Caco-2 (cell line): ENCODE measurements at regions of chr3 and their contacts with region 1.

Region 1: DNA sequence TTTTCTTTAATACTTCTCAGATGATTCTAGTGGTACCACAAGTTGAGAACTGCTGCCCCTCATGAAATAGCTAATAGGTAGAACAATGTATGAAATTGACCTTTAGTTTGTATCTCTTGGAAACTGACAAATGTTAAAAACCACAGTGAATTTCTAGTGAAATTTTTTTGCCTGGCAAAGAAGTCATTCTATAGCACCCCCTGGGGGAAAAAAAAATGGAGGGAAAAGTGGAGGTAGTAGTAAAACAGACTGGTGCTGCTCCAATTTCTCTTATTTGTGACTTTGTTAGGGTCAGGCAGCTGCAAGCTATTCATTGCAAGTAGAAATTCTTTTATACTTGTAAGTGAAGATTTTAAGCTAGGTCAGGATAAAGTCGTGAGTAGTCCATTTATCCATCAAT is 605.0 kb downstream of the NLGN1 start:
- DNase-seq: peak in 1 of 2 experiments; percentile 35
- H3K4me3 ChIP-seq: no peak overlapping the region
- H3K4me3 Mint-ChIP-seq: no peak overlapping the region
- H3K27ac Mint-ChIP-seq: no peak overlapping the region
- H3K4me1 ChIP-seq: no peaks in the 10 kb centered on the region
- H3K4me1 Mint-ChIP-seq: no peaks in the 10 kb centered on the region
- H3K27me3 ChIP-seq: no peaks in the 10 kb centered on the region; the same call in 1 of the 2 replicates
- H3K27me3 Mint-ChIP-seq: peaks cover 12% of the 10 kb centered on the region
- CTCF ChIP-seq: peak; percentile 13 to 15

Region 2: GRCh38 chr3:173411375-173411973 is 591.1 kb before region 1 on chr3:
- CTCF ChIA-PET with region 1: no interaction called
- POLR2A ChIA-PET with region 1: no interaction called
- intact Hi-C with region 1: loop called (anchors 2 kb)
- DNase-seq: no peak
- H3K4me3 ChIP-seq: no peak overlapping the region
- H3K4me3 Mint-ChIP-seq: no peak overlapping the region
- H3K27ac Mint-ChIP-seq: no peak overlapping the region
- H3K4me1 ChIP-seq: no peaks in the 10 kb centered on the region
- H3K4me1 Mint-ChIP-seq: no peaks in the 10 kb centered on the region
- H3K27me3 ChIP-seq: no peaks in the 10 kb centered on the region
- H3K27me3 Mint-ChIP-seq: peaks cover 15% of the 10 kb centered on the region
- CTCF ChIP-seq: peak in 1 of 2 experiments; percentile 21

Region 3: GRCh38 chr3:173733029-173733652 is 269.4 kb before region 1 on chr3:
- CTCF ChIA-PET with region 1: no interaction called
- POLR2A ChIA-PET with region 1: no interaction called
- intact Hi-C with region 1: loop called (anchors 5 kb)
- DNase-seq: peak in 1 of 2 experiments; percentile 20
- H3K4me3 ChIP-seq: no peak overlapping the region
- H3K4me3 Mint-ChIP-seq: no peak overlapping the region
- H3K27ac Mint-ChIP-seq: no peak overlapping the region
- H3K4me1 ChIP-seq: no peaks in the 10 kb centered on the region
- H3K4me1 Mint-ChIP-seq: no peaks in the 10 kb centered on the region
- H3K27me3 ChIP-seq: no peaks in the 10 kb centered on the region
- H3K27me3 Mint-ChIP-seq: no peaks in the 10 kb centered on the region
- CTCF ChIP-seq: peak; percentile 38 to 48

Region 4: DNA sequence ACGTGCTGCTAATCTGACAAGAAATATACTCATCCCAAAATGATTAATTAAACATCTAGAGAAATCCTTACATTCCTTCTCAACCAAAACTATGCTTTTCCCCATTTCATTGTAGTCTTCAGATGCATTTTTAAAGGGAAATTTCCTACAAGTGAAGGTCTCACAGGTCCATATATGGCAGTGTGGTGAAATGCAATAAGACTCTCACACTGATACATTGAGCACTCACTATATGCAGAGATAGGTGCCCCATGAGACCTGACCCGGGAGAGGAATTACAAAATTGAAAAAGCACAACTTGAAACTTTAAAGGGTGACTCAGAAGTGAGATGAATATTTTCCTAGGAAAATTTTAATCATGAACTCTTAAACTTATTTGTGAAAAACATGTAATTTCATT is 227.4 kb after region 1 on chr3:
- CTCF ChIA-PET with region 1: no interaction called
- POLR2A ChIA-PET with region 1: no interaction called
- intact Hi-C with region 1: no loop called
- DNase-seq: no peak
- H3K4me3 ChIP-seq: no peak overlapping the region
- H3K4me3 Mint-ChIP-seq: no peak overlapping the region
- H3K27ac Mint-ChIP-seq: no peak overlapping the region
- H3K4me1 ChIP-seq: no peaks in the 10 kb centered on the region
- H3K4me1 Mint-ChIP-seq: no peaks in the 10 kb centered on the region
- H3K27me3 ChIP-seq: no peaks in the 10 kb centered on the region
- H3K27me3 Mint-ChIP-seq: no peaks in the 10 kb centered on the region
- CTCF ChIP-seq: no peak

Region 5: DNA sequence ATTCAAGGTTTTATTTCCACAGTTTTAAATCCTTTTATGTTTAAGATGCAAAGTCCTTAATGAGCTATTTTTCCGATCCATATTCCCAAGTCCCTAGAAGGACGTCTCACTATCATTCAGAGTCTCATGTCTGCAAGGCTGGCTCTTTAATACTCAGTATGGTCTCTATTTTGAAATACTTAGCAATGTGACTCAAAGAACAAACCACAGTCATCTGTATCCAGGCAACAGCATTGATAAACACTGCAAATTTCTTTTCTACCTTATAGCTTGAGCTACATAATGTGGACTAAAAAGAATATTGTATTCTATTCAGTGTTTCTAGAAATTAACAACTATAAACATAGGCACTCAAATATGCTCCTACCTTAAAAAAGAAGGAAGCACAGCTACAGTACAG is 268.3 kb after region 1 on chr3:
- CTCF ChIA-PET with region 1: no interaction called
- POLR2A ChIA-PET with region 1: no interaction called
- intact Hi-C with region 1: no loop called
- DNase-seq: no peak
- H3K4me3 ChIP-seq: no peak overlapping the region
- H3K4me3 Mint-ChIP-seq: no peak overlapping the region
- H3K27ac Mint-ChIP-seq: no peak overlapping the region
- H3K4me1 ChIP-seq: peaks cover 15% of the 10 kb centered on the region; the same call in 1 of the 2 replicates
- H3K4me1 Mint-ChIP-seq: peaks cover 11% of the 10 kb centered on the region
- H3K27me3 ChIP-seq: no peaks in the 10 kb centered on the region
- H3K27me3 Mint-ChIP-seq: no peaks in the 10 kb centered on the region
- CTCF ChIP-seq: no peak